Activated CD4-positive, alpha-beta memory T cell treated with anti-CD3 and anti-CD28 coated beads for 36 hours (primary cell): ENCODE measurements at regions of chr5 and their contacts with region 1.

Region 1: GRCh38 chr5:134555890-134556311 is 30.4 kb downstream of the JADE2 start:
- DNase-seq: peak; percentile 97
- H3K4me3 Mint-ChIP-seq: peak overlapping the region; percentile 70
- H3K27ac Mint-ChIP-seq: peak overlapping the region; percentile 99
- H3K4me1 Mint-ChIP-seq: peaks cover 47% of the 10 kb centered on the region
- H3K27me3 Mint-ChIP-seq: no peaks in the 10 kb centered on the region

Region 2: DNA sequence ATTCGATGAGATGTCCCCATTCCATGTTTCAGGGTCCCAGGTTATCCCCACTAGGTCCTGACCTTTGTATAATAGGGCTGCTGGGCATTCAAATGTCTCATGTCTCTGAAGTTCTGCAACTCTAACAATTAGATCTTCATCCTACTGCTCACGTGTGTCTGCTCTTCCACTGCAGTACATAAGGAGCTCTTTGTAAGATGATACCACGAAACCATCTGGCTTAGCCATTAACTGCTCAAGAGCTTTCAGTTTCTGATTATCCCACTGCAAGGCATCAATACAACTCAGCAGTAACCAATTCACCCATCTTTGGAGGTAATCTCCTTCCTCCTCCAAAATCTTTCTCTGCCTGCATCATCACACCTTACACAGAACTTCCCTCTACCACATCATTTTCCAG is 280.1 kb before region 1 on chr5:
- CTCF ChIA-PET with region 1: no interaction called
- POLR2A ChIA-PET with region 1: no interaction called
- intact Hi-C with region 1: no loop called
- DNase-seq: no peak
- H3K4me3 Mint-ChIP-seq: no peak overlapping the region
- H3K27ac Mint-ChIP-seq: no peak overlapping the region
- H3K4me1 Mint-ChIP-seq: peaks cover 5% of the 10 kb centered on the region
- H3K27me3 Mint-ChIP-seq: peaks cover 2% of the 10 kb centered on the region

Region 3: DNA sequence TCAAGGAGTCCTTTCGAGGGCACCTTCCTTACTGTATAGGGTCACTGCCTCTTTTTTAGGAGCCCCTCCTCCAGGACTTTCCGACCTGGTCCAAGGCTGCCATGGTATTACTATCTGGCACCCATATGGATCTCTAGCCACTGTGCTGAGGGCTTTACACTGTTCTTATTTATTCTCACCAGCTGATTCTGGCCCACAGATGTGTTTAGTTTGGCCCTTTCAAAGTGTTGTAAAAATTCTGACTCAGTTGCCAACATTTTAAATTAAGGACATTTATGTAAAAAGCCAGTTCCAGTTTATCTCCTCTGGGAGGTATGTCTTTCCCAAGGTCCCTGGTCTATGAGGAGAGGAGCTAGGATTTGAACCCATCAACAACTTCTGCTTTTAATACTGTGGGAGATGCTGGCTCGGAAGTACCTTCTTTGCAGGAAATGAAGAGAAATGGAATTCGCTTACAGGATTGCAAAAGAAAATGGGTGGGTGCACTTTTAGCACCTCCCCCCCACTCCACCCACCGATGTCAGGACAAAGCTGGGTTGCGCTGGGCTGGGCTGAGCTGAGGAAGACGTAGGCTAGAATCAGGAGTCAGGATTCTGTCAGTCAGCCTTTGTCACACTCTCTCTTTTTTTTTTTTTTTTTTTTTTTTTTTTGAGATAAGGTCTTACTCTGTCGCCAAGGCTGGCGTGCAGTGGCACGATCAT is 22.6 kb before region 1 on chr5:
- CTCF ChIA-PET with region 1: interaction called, 33 read pairs
- POLR2A ChIA-PET with region 1: interaction called, 26 read pairs
- intact Hi-C with region 1: no loop called
- DNase-seq: no peak
- H3K4me3 Mint-ChIP-seq: no peak overlapping the region
- H3K27ac Mint-ChIP-seq: no peak overlapping the region
- H3K4me1 Mint-ChIP-seq: peaks cover 86% of the 10 kb centered on the region
- H3K27me3 Mint-ChIP-seq: no peaks in the 10 kb centered on the region

Region 4: GRCh38 chr5:134541736-134542376 is 14.0 kb before region 1 on chr5:
- CTCF ChIA-PET with region 1: interaction called, 28 read pairs
- POLR2A ChIA-PET with region 1: interaction called, 23 read pairs
- intact Hi-C with region 1: loop called (anchors 1 kb)
- DNase-seq: peak; percentile 49
- H3K4me3 Mint-ChIP-seq: no peak overlapping the region
- H3K27ac Mint-ChIP-seq: peak overlapping the region; percentile 66
- H3K4me1 Mint-ChIP-seq: peaks cover 67% of the 10 kb centered on the region
- H3K27me3 Mint-ChIP-seq: no peaks in the 10 kb centered on the region